Dendritic cell treated with granulocyte-macrophage colony-stimulating factor and Interleukin-4, amounts not matched to agents 40 ng/mL and 50 ng/mL, for 4 days (primary cell): ENCODE measurements at regions of chr22 and their contacts with region 1.

Region 1: DNA sequence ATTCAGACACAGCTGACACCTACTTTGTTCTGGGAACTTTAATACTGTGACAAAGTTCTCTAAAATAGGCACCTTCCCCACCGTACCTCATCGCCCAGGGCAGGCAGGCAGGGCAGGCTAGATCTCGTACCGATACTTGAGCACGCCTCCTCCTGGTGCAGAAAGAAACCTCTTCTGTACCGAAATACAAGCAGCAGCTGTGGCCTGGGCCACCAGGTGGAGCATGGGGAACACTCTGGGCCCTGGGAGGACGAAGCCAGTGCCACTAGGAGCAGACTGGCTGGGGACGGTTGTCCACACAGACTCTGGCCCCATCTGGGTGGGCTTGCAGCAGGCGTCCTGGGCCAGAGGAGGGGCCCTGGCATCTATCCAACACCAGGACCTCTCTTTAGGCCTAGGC is 12.8 kb downstream of the PMM1 start:
- H3K4me3 Mint-ChIP-seq: no peak overlapping the region
- H3K27ac Mint-ChIP-seq: no peak overlapping the region
- H3K4me1 Mint-ChIP-seq: no peaks in the 10 kb centered on the region
- H3K27me3 Mint-ChIP-seq: no peaks in the 10 kb centered on the region

Region 2: GRCh38 chr22:41106122-41106968 is 470.5 kb before region 1 on chr22:
- intact Hi-C with region 1: no loop called
- H3K4me3 Mint-ChIP-seq: no peak overlapping the region
- H3K27ac Mint-ChIP-seq: peak overlapping the region; percentile 19
- H3K4me1 Mint-ChIP-seq: peaks cover 46% of the 10 kb centered on the region
- H3K27me3 Mint-ChIP-seq: no peaks in the 10 kb centered on the region

Region 3: GRCh38 chr22:41596776-41597634 is 20.1 kb after region 1 on chr22:
- intact Hi-C with region 1: loop called (anchors 2 kb)
- H3K4me3 Mint-ChIP-seq: no peak overlapping the region
- H3K27ac Mint-ChIP-seq: peak overlapping the region; percentile 40
- H3K4me1 Mint-ChIP-seq: no peaks in the 10 kb centered on the region
- H3K27me3 Mint-ChIP-seq: peaks cover 1% of the 10 kb centered on the region